Activated CD4-positive, alpha-beta memory T cell treated with anti-CD3 and anti-CD28 coated beads for 36 hours (primary cell): ENCODE measurements at regions of chr21 and their contacts with region 1.

Region 1: GRCh38 chr21:44011980-44012527 is at the start of gene TRAPPC10:
- DNase-seq: peak; percentile 88
- H3K4me3 Mint-ChIP-seq: peak within 1 kb of the TSS; percentile 91
- H3K27ac Mint-ChIP-seq: peak within 1 kb of the TSS; percentile 94
- H3K4me1 Mint-ChIP-seq: peaks cover 38% of the 10 kb centered on the region
- H3K27me3 Mint-ChIP-seq: no peaks in the 10 kb centered on the region
- total RNA-seq, gene TRAPPC10: 46.1 to 50.5 TPM

Region 2: DNA sequence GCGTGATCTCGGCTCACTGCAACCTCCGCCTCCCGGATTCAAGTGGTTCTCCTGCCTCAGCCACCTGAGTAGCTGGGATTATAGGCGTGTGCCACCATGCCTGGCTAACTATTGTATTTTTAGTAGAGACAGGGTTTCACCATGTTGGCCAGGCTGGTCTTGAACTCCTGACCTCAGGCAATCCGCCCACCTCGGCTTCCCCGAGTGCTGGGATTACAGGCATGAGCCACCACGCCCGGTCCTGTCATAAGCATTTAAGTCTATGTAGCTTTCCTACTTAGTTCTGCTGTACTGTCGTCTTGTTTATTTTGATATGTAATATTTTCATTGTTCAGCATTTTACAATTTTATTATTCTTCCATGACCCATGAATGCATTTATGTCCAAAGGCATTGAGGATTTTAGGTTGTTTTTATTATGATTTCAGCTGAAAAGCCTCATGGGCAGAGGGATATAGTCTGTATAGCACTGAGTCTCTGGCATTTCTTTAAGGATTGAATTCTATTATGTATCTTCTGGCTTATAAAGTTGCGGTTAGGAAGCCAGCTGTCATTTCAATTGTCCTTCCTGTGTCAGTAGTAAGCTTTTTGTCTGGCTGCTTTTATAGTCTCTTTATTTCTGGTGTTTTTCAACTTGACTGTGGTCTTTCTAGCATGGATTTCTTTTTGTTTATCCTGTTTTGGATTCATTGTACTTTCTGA is 137.8 kb before region 1 on chr21:
- CTCF ChIA-PET with region 1: no interaction called
- POLR2A ChIA-PET with region 1: interaction called, 3 read pairs
- intact Hi-C with region 1: loop called (anchors 10 kb)
- DNase-seq: no peak
- H3K4me3 Mint-ChIP-seq: no peak overlapping the region
- H3K27ac Mint-ChIP-seq: peak overlapping the region; percentile 11
- H3K4me1 Mint-ChIP-seq: peaks cover 56% of the 10 kb centered on the region
- H3K27me3 Mint-ChIP-seq: no peaks in the 10 kb centered on the region